Activated CD8-positive, alpha-beta memory T cell treated with anti-CD3 and anti-CD28 coated beads, Interleukin-2, amount 10 ng/mL, durations not matched to agents 7 days and 5 days (primary cell): ENCODE measurements at regions of chr12 and their contacts with region 1.

Region 1: DNA sequence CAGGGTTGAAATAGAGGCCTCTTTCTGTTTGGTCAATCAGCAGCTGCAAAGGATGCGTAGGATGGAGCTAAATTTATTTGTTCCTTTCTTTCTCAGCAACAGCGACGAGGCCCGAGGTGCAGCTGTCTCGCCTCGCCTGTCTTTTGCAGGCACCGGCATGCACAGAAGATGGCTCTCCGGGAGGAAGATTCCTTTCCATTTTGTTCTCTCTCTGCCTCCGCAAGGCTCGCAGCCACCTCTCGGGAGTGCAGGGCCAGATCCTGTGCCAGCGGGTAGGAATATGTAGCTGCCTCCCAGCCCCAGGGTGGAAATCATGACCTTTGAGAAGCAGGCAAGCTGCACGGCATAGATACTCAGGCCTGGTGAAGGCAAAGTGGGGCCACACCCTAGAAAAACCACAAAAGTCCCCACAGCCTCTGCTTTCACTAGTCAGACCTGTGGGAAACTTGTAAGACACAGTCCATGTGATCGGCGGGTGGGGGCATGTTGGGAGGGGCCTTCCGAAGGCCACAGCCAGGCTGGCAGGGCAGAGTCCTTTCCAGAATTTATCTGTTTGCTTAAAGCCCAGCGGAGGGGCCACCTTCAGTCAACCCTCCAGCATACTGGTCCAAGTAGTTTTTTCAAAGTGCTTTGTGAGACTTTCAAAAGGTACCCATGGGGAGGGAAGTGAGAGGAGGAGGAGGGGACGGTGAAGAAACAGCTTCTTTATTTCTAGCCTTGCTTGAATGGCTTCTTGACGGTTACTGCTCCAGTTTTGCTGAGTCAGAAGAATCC is at the start of gene MAP1LC3B2:
- DNase-seq: peak; percentile 98
- ATAC-seq: peak; percentile 83
- H3K4me3 Mint-ChIP-seq: peak within 1 kb of the TSS; percentile 72
- H3K27ac Mint-ChIP-seq: peak within 1 kb of the TSS; percentile 99
- H3K4me1 Mint-ChIP-seq: peaks cover 28% of the 10 kb centered on the region
- H3K27me3 Mint-ChIP-seq: peaks cover 13% of the 10 kb centered on the region
- total RNA-seq, gene MAP1LC3B2: 0.54 to 1.7 TPM

Region 2: GRCh38 chr12:116533343-116534251 is 25.8 kb before region 1 on chr12:
- CTCF ChIA-PET with region 1: interaction called, 23 read pairs
- DNase-seq: peak; percentile 85
- ATAC-seq: peak; percentile 96
- H3K4me3 Mint-ChIP-seq: peak overlapping the region; percentile 79
- H3K27ac Mint-ChIP-seq: peak overlapping the region; percentile 79
- H3K4me1 Mint-ChIP-seq: peaks cover 42% of the 10 kb centered on the region
- H3K27me3 Mint-ChIP-seq: peaks cover 11% of the 10 kb centered on the region

Region 3: GRCh38 chr12:116547955-116548501 is 11.3 kb before region 1 on chr12:
- CTCF ChIA-PET with region 1: interaction called, 12 read pairs
- DNase-seq: peak; percentile 55
- ATAC-seq: peak; percentile 30
- H3K4me3 Mint-ChIP-seq: no peak overlapping the region
- H3K27ac Mint-ChIP-seq: peak overlapping the region; percentile 58
- H3K4me1 Mint-ChIP-seq: peaks cover 8% of the 10 kb centered on the region
- H3K27me3 Mint-ChIP-seq: peaks cover 6% of the 10 kb centered on the region

Region 4: GRCh38 chr12:116599285-116600136 is 40.2 kb after region 1 on chr12:
- CTCF ChIA-PET with region 1: interaction called, 26 read pairs
- DNase-seq: peak; percentile 69
- ATAC-seq: peak; percentile 74
- H3K4me3 Mint-ChIP-seq: no peak overlapping the region
- H3K27ac Mint-ChIP-seq: no peak overlapping the region
- H3K4me1 Mint-ChIP-seq: peaks cover 21% of the 10 kb centered on the region
- H3K27me3 Mint-ChIP-seq: peaks cover 5% of the 10 kb centered on the region

Region 5: GRCh38 chr12:116631619-116632018 is 72.3 kb after region 1 on chr12:
- CTCF ChIA-PET with region 1: no interaction called
- DNase-seq: no peak
- ATAC-seq: no peak
- H3K4me3 Mint-ChIP-seq: no peak overlapping the region
- H3K27ac Mint-ChIP-seq: no peak overlapping the region
- H3K4me1 Mint-ChIP-seq: no peaks in the 10 kb centered on the region
- H3K27me3 Mint-ChIP-seq: peaks cover 41% of the 10 kb centered on the region